K562 (cell line): ENCODE measurements at regions of chr7 and their contacts with region 1.

Region 1: GRCh38 chr7:90455163-90456030 is 14.0 kb upstream of the PTTG1IP2 start:
- DNase-seq: peak; percentile 32 to 44 (median 38)
- ATAC-seq: peak; percentile 89
- H3K4me3 ChIP-seq: no peak overlapping the region
- H3K27ac ChIP-seq: no peak overlapping the region
- H3K4me1 ChIP-seq: no peaks in the 10 kb centered on the region
- H3K27me3 ChIP-seq: no peaks in the 10 kb centered on the region
- CTCF ChIP-seq: peak; percentile 55 to 77 (median 67); a peak in 5 of 6 replicates
- EP300 ChIP-seq: no peak
- POLR2A ChIP-seq: no peak
- RAD21 ChIP-seq: peak; percentile 50 to 69

Region 2: GRCh38 chr7:90629297-90629918 is 174.0 kb after region 1 on chr7:
- CTCF ChIA-PET with region 1: interaction called, 3 read pairs
- POLR2A ChIA-PET with region 1: no interaction called
- in situ Hi-C with region 1: no loop called
- intact Hi-C with region 1: loop called (anchors 5 kb)
- DNase-seq: peak in 3 of 4 experiments; percentile 16 to 43 (median 37)
- ATAC-seq: peak; percentile 92
- H3K4me3 ChIP-seq: no peak overlapping the region
- H3K27ac ChIP-seq: no peak overlapping the region
- H3K4me1 ChIP-seq: no peaks in the 10 kb centered on the region
- H3K27me3 ChIP-seq: no peaks in the 10 kb centered on the region
- CTCF ChIP-seq: peak; percentile 34 to 69 (median 59); a peak in 4 of 6 replicates
- EP300 ChIP-seq: no peak
- POLR2A ChIP-seq: no peak
- RAD21 ChIP-seq: peak in 1 of 2 experiments; percentile 26; a peak in 1 of 4 replicates

Region 3: GRCh38 chr7:91034459-91035368 is 579.3 kb after region 1 on chr7:
- CTCF ChIA-PET with region 1: interaction called, 5 read pairs
- POLR2A ChIA-PET with region 1: no interaction called
- in situ Hi-C with region 1: no loop called
- intact Hi-C with region 1: loop called (anchors 2 kb)
- DNase-seq: peak; percentile 32 to 50 (median 46)
- ATAC-seq: peak; percentile 75
- H3K4me3 ChIP-seq: no peak overlapping the region
- H3K27ac ChIP-seq: no peak overlapping the region
- H3K4me1 ChIP-seq: no peaks in the 10 kb centered on the region
- H3K27me3 ChIP-seq: no peaks in the 10 kb centered on the region
- CTCF ChIP-seq: peak; percentile 48 to 55 (median 52)
- EP300 ChIP-seq: no peak
- POLR2A ChIP-seq: no peak
- RAD21 ChIP-seq: peak; percentile 34 to 57

Region 4: GRCh38 chr7:91551377-91552175 is 1096.2 kb after region 1 on chr7:
- CTCF ChIA-PET with region 1: no interaction called
- POLR2A ChIA-PET with region 1: no interaction called
- in situ Hi-C with region 1: no loop called
- intact Hi-C with region 1: no loop called
- DNase-seq: no peak
- ATAC-seq: no peak
- H3K4me3 ChIP-seq: no peak overlapping the region
- H3K27ac ChIP-seq: no peak overlapping the region
- H3K4me1 ChIP-seq: peaks cover 3 to 20% of the 10 kb centered on the region in 2 experiments; a peak in 4 of 5 replicates
- H3K27me3 ChIP-seq: no peaks in the 10 kb centered on the region
- CTCF ChIP-seq: no peak
- EP300 ChIP-seq: no peak
- POLR2A ChIP-seq: no peak
- RAD21 ChIP-seq: no peak